Astrocyte of the cerebellum (primary cell): ENCODE measurements at regions of chr10 and their contacts with region 1.

Region 1: GRCh38 chr10:11602919-11603523 is 8.4 kb downstream of the USP6NL start:
- DNase-seq: no peak
- H3K4me3 ChIP-seq: no peak overlapping the region
- CTCF ChIP-seq: no peak

Region 2: DNA sequence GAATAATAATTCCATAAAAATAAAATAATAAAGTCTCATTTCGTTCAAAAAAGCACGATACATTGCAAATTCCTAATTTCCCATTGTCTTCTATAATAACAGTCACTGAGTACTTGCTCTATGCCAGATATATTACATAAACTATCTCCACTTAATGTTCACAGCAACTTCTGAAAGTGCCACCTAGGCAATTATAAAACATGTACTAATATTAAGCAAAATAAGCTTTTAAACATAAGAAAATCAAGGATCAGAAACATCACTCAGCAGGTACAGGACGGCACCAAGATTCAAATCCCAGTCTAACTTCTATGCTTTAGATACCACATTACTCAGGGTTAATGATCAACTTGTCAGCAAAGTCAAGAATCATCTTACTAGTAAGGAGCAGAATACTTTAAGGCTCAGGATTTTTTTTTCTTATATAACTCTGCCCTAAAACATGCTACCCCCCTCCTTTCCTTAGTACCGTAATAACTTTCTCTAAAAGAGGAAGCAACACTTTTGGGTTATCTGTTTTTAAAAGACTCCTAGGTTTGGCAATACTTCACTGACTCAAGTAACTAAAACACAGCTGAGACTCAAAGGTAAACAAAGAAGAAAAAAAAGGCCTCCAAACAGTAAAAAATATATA is 42.8 kb before region 1 on chr10:
- in situ Hi-C with region 1: loop called (anchors 5 kb)
- DNase-seq: no peak
- H3K4me3 ChIP-seq: no peak overlapping the region
- CTCF ChIP-seq: no peak

Region 3: GRCh38 chr10:11678074-11678793 is 75.2 kb after region 1 on chr10:
- in situ Hi-C with region 1: loop called (anchors 5 kb)
- DNase-seq: no peak
- H3K4me3 ChIP-seq: no peak overlapping the region
- CTCF ChIP-seq: no peak